BJ (cell line): ENCODE measurements at regions of chrX and their contacts with region 1.

Region 1: DNA sequence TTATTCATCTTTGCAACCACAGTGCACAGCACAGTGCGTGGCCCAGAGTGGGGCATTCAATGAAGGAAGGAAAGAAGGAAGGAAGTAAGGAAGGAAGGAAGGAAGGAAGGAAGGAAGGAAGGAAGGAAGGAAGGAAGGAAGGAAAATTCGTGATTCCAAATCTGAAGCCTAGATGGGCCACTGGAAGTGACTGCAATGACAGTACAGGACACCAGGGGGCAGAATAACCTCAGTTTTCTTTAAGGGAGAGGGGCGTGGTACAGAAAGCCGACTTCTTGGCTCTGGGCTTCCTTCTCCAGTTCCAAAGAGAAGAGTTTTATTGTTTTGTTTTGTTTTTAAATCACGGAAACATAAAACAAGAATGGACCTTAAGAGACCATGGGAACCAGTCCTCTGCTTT is 47.8 kb downstream of the APLN start:
- DNase-seq: no peak
- H3K4me3 ChIP-seq: no peak overlapping the region
- H3K27me3 ChIP-seq: 0 out of 2 replicates have a peak, but pooled peaks cover 2% of the 10 kb centered on the region
- CTCF ChIP-seq: peak; percentile 60

Region 2: GRCh38 chrX:129323115-129323514 is 283.8 kb before region 1 on chrX:
- CTCF ChIA-PET with region 1: no interaction called
- POLR2A ChIA-PET with region 1: no interaction called
- DNase-seq: no peak
- H3K4me3 ChIP-seq: no peak overlapping the region
- H3K27me3 ChIP-seq: no peaks in the 10 kb centered on the region
- CTCF ChIP-seq: no peak

Region 3: DNA sequence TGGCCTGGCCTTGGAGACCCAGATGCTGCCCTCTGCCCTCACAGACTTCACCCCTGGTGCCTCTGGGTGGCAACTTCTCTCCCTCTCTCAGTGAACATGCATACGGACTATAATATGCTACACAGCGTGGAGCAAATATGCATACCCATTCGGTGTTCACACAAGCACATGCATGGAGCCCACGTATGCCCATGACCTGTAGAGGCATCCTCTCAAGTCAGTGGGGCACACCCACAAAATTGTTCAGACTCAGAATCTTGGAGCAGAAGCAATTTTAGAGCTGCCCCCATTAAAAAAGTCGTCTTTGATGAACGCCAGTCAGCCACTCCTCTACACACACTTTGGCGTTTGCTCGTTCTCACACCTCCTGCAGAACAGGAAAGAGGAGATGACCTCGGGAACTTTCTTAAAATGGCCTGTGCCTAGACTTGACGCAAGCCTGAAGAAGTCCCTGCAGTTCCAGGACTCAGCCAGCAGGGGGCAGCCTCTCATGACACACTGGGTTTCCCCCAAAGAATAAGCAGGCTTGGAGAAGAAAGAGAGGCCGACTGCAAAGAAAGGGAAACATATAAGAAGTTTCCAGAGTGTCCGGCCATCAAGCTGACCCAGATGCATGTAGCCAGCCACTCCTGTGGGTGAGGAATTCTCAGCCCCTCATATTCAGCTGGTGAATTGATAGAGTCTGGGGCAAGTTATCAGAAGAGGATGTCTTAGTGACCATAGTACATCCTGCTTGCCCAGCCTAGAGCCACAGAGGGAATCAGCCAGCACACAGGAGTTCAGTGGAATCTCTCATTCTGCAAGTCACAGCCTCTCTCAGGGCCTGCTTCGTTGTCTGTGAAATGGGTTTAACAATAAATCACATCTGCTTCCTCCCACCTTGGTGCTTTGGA is 30.5 kb after region 1 on chrX:
- CTCF ChIA-PET with region 1: interaction called, 12 read pairs
- POLR2A ChIA-PET with region 1: no interaction called
- DNase-seq: no peak
- H3K4me3 ChIP-seq: no peak overlapping the region
- H3K27me3 ChIP-seq: peaks cover 2% of the 10 kb centered on the region; the same call in 1 of the 2 replicates
- CTCF ChIP-seq: peak; percentile 86

Region 4: DNA sequence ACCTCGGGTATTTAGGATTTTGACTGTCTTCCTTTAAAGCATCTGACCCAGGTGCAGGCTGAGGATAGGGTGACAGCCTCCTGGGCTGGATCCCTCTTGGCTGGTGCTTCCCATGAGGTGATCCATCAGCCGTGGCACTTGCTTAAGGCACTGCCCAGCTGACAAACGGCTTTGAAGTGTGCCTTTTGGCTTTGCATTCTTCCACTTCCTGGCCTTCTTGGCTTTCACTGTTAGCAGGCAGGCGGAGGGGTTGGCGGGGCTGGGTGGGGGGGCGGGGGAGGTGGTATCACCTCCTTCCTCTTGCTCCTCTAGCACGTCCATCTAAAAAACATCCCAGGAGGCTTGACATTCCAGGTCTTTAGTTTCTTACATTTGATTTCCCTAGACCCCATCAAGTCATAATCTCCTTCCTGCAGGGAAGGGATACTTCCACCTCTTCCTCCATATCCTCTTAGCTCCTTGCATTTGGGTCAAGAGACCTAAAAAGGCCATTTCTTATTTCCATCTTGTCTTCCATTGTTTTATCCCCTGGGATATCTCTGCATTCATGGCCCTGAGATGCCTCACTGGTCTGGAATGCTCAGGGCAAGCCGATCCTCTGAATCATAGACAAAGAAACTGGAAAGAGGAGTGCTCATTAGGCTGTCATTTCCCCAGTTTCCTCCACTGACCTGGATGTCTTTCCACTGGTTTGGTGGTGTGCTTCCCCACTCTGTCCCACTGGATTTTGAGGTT is 59.2 kb after region 1 on chrX:
- CTCF ChIA-PET with region 1: no interaction called
- POLR2A ChIA-PET with region 1: no interaction called
- DNase-seq: peak; percentile 21
- H3K4me3 ChIP-seq: no peak overlapping the region
- H3K27me3 ChIP-seq: no peaks in the 10 kb centered on the region
- CTCF ChIP-seq: no peak

Region 5: DNA sequence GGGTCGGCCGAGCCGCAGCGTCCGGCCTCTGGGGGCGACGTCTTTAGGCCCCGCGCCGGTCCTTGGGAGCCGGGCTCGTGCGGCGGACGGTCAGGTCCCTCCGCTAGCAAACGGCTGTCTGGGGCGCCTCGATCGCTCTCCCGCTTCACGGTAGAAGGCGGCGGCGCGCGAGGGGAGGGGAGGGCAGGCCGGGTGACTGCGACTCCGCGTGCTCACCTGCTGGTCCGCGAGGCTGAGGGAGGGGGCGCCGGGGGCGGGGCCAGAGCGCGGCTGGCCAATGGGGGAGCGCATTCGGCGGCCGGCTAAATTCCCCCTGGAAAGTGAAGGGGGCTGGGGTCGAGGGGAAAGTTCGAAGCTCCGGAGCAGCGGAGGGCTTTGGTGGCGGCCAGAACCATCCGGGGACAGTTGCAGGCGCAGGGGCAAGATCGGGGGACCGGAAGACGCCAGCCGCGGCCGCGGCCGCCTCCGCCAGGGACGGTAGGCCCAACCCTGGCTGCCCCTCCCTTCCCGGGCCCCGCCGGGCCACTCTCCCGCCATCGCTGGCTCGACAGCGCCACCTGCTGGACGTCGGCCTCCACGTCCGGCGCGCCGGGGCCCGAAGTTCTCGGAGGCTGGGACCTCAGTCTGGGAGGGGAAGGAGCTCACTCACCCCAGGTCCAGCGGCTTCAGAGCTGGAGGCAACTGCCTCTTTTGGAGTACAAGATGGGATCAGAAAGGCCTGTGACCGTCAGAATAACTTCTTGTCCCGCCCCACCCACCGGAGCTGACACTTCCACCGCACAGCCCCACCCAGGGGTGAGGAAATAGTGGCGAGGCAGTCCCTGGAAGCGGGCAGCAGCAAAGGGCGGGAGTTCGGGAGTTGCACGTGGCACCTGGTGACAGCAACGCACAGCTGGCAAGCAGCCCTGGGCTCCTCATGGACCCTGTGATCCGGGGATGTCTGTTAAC is 453.5 kb after region 1 on chrX:
- CTCF ChIA-PET with region 1: interaction called, 11 read pairs
- POLR2A ChIA-PET with region 1: no interaction called
- DNase-seq: no peak
- H3K4me3 ChIP-seq: peak overlapping the region; percentile 54
- H3K27me3 ChIP-seq: no peaks in the 10 kb centered on the region
- CTCF ChIP-seq: peak; percentile 67